Activated CD4-positive, alpha-beta T cell treated with anti-CD3 and anti-CD28 coated beads for 36 hours (primary cell): ENCODE measurements at regions of chr16 and their contacts with region 1.

Region 1: GRCh38 chr16:84726079-84726668 is 26.4 kb downstream of the USP10 start:
- DNase-seq: peak; percentile 92
- ATAC-seq: peak; percentile 60
- H3K4me3 Mint-ChIP-seq: peak overlapping the region; percentile 48
- H3K27ac Mint-ChIP-seq: peak overlapping the region; percentile 58
- H3K4me1 Mint-ChIP-seq: peaks cover 83% of the 10 kb centered on the region
- H3K27me3 Mint-ChIP-seq: no peaks in the 10 kb centered on the region

Region 2: GRCh38 chr16:84511180-84511824 is 214.9 kb before region 1 on chr16:
- CTCF ChIA-PET with region 1: interaction called, 11 read pairs
- POLR2A ChIA-PET with region 1: no interaction called
- intact Hi-C with region 1: loop called (anchors 1 to 5 kb)
- DNase-seq: peak; percentile 94
- ATAC-seq: peak; percentile 23
- H3K4me3 Mint-ChIP-seq: no peak overlapping the region
- H3K27ac Mint-ChIP-seq: peak overlapping the region; percentile 26
- H3K4me1 Mint-ChIP-seq: peaks cover 69% of the 10 kb centered on the region
- H3K27me3 Mint-ChIP-seq: no peaks in the 10 kb centered on the region

Region 3: DNA sequence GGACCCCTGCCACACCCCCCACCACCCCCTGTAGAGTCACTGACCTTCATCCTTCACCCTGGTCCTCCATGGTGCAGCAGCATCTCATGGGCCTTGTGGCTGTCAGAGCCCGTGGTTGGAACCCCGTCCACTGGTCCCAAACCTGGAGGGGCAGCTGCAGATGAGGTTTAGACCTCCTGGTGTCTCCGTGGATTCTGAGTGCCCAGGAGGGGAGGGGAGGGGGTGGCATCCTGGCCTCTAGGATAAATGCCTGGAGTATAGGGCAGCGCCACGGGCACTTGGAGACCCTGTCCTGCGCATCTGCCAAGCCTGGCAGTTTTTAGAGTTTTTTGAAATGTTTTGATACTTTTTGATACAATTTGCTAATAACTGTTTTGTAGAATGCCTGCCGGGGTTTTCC is 60.3 kb before region 1 on chr16:
- CTCF ChIA-PET with region 1: interaction called, 80 read pairs
- POLR2A ChIA-PET with region 1: no interaction called
- intact Hi-C with region 1: no loop called
- DNase-seq: no peak
- ATAC-seq: no peak
- H3K4me3 Mint-ChIP-seq: no peak overlapping the region
- H3K27ac Mint-ChIP-seq: no peak overlapping the region
- H3K4me1 Mint-ChIP-seq: no peaks in the 10 kb centered on the region
- H3K27me3 Mint-ChIP-seq: no peaks in the 10 kb centered on the region

Region 4: GRCh38 chr16:84699712-84700445 is 26.3 kb before region 1 on chr16 and contains the start of gene USP10:
- CTCF ChIA-PET with region 1: interaction called, 23 read pairs
- POLR2A ChIA-PET with region 1: no interaction called
- intact Hi-C with region 1: loop called (anchors 1 to 2 kb)
- DNase-seq: peak; percentile 90
- ATAC-seq: peak; percentile 83
- H3K4me3 Mint-ChIP-seq: peak within 1 kb of the TSS; percentile 89
- H3K27ac Mint-ChIP-seq: peak within 1 kb of the TSS; percentile 97
- H3K4me1 Mint-ChIP-seq: peaks cover 38% of the 10 kb centered on the region
- H3K27me3 Mint-ChIP-seq: no peaks in the 10 kb centered on the region
- total RNA-seq, gene USP10: 117 to 133 TPM

Region 5: GRCh38 chr16:84754353-84754856 is 28.2 kb after region 1 on chr16:
- CTCF ChIA-PET with region 1: interaction called, 18 read pairs
- POLR2A ChIA-PET with region 1: no interaction called
- intact Hi-C with region 1: no loop called
- DNase-seq: peak; percentile 76
- ATAC-seq: peak; percentile 78
- H3K4me3 Mint-ChIP-seq: no peak overlapping the region
- H3K27ac Mint-ChIP-seq: peak overlapping the region; percentile 49
- H3K4me1 Mint-ChIP-seq: peaks cover 84% of the 10 kb centered on the region
- H3K27me3 Mint-ChIP-seq: no peaks in the 10 kb centered on the region

Region 6: GRCh38 chr16:85202631-85203461 is 476.7 kb after region 1 on chr16:
- CTCF ChIA-PET with region 1: no interaction called
- POLR2A ChIA-PET with region 1: no interaction called
- intact Hi-C with region 1: no loop called
- DNase-seq: no peak
- ATAC-seq: no peak
- H3K4me3 Mint-ChIP-seq: no peak overlapping the region
- H3K27ac Mint-ChIP-seq: no peak overlapping the region
- H3K4me1 Mint-ChIP-seq: no peaks in the 10 kb centered on the region
- H3K27me3 Mint-ChIP-seq: peaks cover 2% of the 10 kb centered on the region

Region 7: GRCh38 chr16:86365513-86366273 is 1639.5 kb after region 1 on chr16:
- CTCF ChIA-PET with region 1: no interaction called
- POLR2A ChIA-PET with region 1: no interaction called
- intact Hi-C with region 1: no loop called
- DNase-seq: no peak
- ATAC-seq: no peak
- H3K4me3 Mint-ChIP-seq: no peak overlapping the region
- H3K27ac Mint-ChIP-seq: no peak overlapping the region
- H3K4me1 Mint-ChIP-seq: no peaks in the 10 kb centered on the region
- H3K27me3 Mint-ChIP-seq: peaks cover 20% of the 10 kb centered on the region